CD4-positive, alpha-beta memory T cell (primary cell): ENCODE measurements at regions of chr7 and their contacts with region 1.

Region 1: DNA sequence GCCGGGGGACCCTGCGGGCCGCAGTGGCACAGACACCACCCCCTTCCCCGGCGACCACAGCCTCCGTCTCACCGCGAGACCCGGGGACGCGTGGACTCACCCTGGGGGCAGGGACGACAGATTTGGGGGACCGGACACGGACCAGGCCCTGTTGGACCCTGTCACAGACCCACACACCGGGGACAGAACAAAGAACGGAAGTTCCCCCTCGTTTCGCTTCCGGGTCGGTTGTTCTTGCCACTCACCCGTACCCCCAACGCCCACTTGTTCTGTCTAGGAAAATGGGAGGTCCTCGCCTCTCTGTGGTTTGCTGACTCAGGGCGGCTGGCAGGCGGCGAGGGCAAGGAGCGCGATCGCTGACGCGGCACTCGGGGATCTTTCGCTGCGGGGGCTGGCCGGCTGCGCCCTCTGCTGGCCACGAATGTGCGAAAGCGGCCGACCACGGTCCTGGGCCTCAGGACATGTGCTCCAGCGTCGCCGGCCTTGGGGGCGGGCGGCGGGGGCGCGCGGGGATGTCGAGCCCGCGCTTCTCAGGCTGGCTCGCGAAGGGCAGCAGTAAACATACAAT is at the start of gene ZNF3:
- DNase-seq: peak; percentile 98 to 99 (median 98)
- H3K4me3 ChIP-seq: peak within 1 kb of the TSS; percentile 87 to 88
- H3K4me3 Mint-ChIP-seq: peak within 1 kb of the TSS; percentile 85 to 97 (median 94)
- H3K27ac ChIP-seq: peak within 1 kb of the TSS; percentile 74
- H3K27ac Mint-ChIP-seq: peak within 1 kb of the TSS; percentile 90 to 99 (median 95)
- H3K4me1 ChIP-seq: peaks cover 25% of the 10 kb centered on the region
- H3K4me1 Mint-ChIP-seq: peaks cover 23 to 48% (median 36%) of the 10 kb centered on the region in 4 donors
- H3K27me3 ChIP-seq: no peaks in the 10 kb centered on the region
- H3K27me3 Mint-ChIP-seq: no peaks in the 10 kb centered on the region
- total RNA-seq, gene ZNF3: 44.2 to 44.8 TPM

Region 2: DNA sequence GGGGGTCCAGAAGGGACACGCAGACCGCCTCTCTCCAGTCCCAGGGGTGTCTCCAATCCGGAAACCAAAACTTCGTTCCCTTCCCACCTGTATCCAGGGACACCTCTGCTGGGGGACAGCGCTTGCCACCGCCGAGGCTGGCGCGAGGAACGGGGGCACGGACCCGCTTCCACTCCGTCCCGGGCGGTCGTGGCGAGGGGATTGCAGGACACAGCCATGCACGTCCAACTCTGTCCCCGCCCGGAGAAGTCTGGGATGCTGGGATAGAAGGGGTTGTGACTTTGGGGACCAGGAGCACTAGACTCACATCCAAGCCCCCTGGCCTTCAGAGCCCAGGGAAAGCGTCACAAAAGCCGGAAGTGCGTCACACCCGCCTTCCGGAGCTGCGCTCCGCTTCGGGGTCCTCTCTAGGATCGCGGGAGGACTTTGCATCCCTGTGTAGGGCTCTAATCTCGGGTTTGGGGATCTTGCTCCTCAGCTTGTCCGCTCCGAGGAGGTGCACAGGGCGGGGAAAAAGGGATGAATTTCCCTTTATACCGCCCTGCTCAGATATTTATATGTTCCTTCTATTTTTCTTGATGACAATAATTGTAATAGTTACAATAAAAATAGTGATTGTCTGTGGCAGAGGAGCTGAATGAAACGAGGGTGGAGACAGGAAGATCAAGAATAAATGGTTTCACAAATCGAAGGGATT is 529.7 kb before region 1 on chr7 and contains the start of gene FAM200A:
- CTCF ChIA-PET with region 1: no interaction called
- POLR2A ChIA-PET with region 1: no interaction called
- intact Hi-C with region 1: loop called (anchors 10 kb)
- DNase-seq: peak; percentile 82 to 88 (median 84)
- H3K4me3 ChIP-seq: peak within 1 kb of the TSS; percentile 94 to 95
- H3K4me3 Mint-ChIP-seq: peak within 1 kb of the TSS; percentile 86 to 98 (median 92)
- H3K27ac ChIP-seq: peak within 1 kb of the TSS; percentile 97
- H3K27ac Mint-ChIP-seq: peak within 1 kb of the TSS; percentile 76 to 99 (median 91)
- H3K4me1 ChIP-seq: peaks cover 33% of the 10 kb centered on the region
- H3K4me1 Mint-ChIP-seq: peaks cover 16 to 48% (median 30%) of the 10 kb centered on the region in 4 donors
- H3K27me3 ChIP-seq: no peaks in the 10 kb centered on the region
- H3K27me3 Mint-ChIP-seq: no peaks in the 10 kb centered on the region
- total RNA-seq, gene FAM200A: 12.9 to 13.0 TPM

Region 3: GRCh38 chr7:99844328-99844727 is 237.3 kb before region 1 on chr7:
- CTCF ChIA-PET with region 1: no interaction called
- POLR2A ChIA-PET with region 1: no interaction called
- intact Hi-C with region 1: no loop called
- DNase-seq: no peak
- H3K4me3 ChIP-seq: no peak overlapping the region
- H3K4me3 Mint-ChIP-seq: no peak overlapping the region
- H3K27ac ChIP-seq: no peak overlapping the region
- H3K27ac Mint-ChIP-seq: no peak overlapping the region
- H3K4me1 ChIP-seq: no peaks in the 10 kb centered on the region
- H3K4me1 Mint-ChIP-seq: no peaks in the 10 kb centered on the region
- H3K27me3 ChIP-seq: no peaks in the 10 kb centered on the region
- H3K27me3 Mint-ChIP-seq: peaks cover 0 to 16% of the 10 kb centered on the region in 2 donors

Region 4: DNA sequence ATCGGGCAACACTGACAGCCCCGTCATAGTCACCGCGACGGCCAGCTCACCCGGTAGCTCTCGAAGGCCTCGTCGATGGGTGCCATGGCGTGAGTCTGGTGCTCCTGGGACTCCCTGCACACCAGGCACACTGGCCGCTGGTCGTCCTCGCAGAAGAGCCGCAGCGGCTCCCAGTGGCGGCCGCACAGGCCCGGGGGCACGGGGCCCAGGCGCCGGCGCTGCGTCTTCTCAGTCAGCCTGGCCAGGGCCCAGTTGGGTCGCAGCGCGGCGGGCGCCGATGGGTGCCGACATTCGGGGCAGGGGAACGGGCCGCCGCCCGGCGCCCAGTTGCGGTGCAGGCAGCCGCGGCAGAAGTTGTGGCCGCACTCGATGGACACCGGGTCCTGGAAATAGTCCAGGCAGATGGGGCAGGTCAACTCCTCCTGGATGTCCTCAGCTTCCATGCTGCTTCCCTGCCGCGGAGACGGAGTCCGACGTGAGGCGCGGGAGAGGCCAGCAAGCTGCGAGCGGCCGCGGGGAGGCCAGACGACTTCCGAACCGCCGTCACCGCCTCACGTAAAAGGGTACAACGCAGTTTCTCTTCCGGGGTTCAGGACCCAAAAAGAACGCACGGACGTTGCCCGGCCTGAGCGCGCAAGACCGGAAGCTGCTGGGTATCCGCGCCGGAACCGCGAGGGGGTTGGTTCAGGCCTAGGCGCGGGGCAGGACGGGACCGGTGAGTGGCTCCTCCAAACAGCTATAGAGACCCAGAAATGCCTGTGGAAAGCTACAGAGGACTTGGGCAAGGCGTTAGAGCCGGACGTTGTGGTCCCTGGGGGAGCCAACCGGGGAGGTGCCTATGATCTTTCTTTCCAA is 162.4 kb before region 1 on chr7 and contains the start of gene TRIM4:
- CTCF ChIA-PET with region 1: interaction called, 15 read pairs
- POLR2A ChIA-PET with region 1: interaction called, 10 read pairs
- intact Hi-C with region 1: no loop called
- DNase-seq: peak; percentile 89 to 90 (median 89)
- H3K4me3 ChIP-seq: peak within 1 kb of the TSS; percentile 85 to 89
- H3K4me3 Mint-ChIP-seq: peak within 1 kb of the TSS; percentile 95 to 98 (median 96)
- H3K27ac ChIP-seq: peak within 1 kb of the TSS; percentile 94
- H3K27ac Mint-ChIP-seq: peak within 1 kb of the TSS; percentile 95 to 99 (median 98)
- H3K4me1 ChIP-seq: peaks cover 41% of the 10 kb centered on the region
- H3K4me1 Mint-ChIP-seq: peaks cover 37 to 61% (median 48%) of the 10 kb centered on the region in 4 donors
- H3K27me3 ChIP-seq: no peaks in the 10 kb centered on the region
- H3K27me3 Mint-ChIP-seq: no peaks in the 10 kb centered on the region
- total RNA-seq, gene TRIM4: 69.0 to 69.7 TPM

Region 5: GRCh38 chr7:99997545-99998137 is 84.0 kb before region 1 on chr7:
- CTCF ChIA-PET with region 1: interaction called, 3 read pairs
- POLR2A ChIA-PET with region 1: interaction called, 6 read pairs
- intact Hi-C with region 1: loop called (anchors 1 kb)
- DNase-seq: peak; percentile 72 to 78 (median 76)
- H3K4me3 ChIP-seq: peak overlapping the region in 1 of 2 donors; percentile 43
- H3K4me3 Mint-ChIP-seq: peak overlapping the region; percentile 58 to 80 (median 75)
- H3K27ac ChIP-seq: peak overlapping the region; percentile 3
- H3K27ac Mint-ChIP-seq: peak overlapping the region; percentile 69 to 95 (median 90)
- H3K4me1 ChIP-seq: peaks cover 18% of the 10 kb centered on the region
- H3K4me1 Mint-ChIP-seq: peaks cover 8 to 15% (median 12%) of the 10 kb centered on the region in 4 donors
- H3K27me3 ChIP-seq: no peaks in the 10 kb centered on the region
- H3K27me3 Mint-ChIP-seq: no peaks in the 10 kb centered on the region

Region 6: GRCh38 chr7:100049441-100050311 is 31.9 kb before region 1 on chr7 and contains the start of gene ZSCAN21:
- CTCF ChIA-PET with region 1: interaction called, 6 read pairs
- POLR2A ChIA-PET with region 1: no interaction called
- intact Hi-C with region 1: loop called (anchors 1 kb)
- DNase-seq: peak; percentile 76 to 82 (median 77)
- H3K4me3 ChIP-seq: peak within 1 kb of the TSS; percentile 67 to 94
- H3K4me3 Mint-ChIP-seq: peak within 1 kb of the TSS; percentile 91 to 97 (median 94)
- H3K27ac ChIP-seq: peak within 1 kb of the TSS; percentile 83
- H3K27ac Mint-ChIP-seq: peak within 1 kb of the TSS; percentile 91 to 98 (median 97)
- H3K4me1 ChIP-seq: peaks cover 13% of the 10 kb centered on the region
- H3K4me1 Mint-ChIP-seq: peaks cover 11 to 28% (median 18%) of the 10 kb centered on the region in 4 donors
- H3K27me3 ChIP-seq: no peaks in the 10 kb centered on the region
- H3K27me3 Mint-ChIP-seq: no peaks in the 10 kb centered on the region
- total RNA-seq, gene ZSCAN21: 9.9 to 10.6 TPM

Region 7: DNA sequence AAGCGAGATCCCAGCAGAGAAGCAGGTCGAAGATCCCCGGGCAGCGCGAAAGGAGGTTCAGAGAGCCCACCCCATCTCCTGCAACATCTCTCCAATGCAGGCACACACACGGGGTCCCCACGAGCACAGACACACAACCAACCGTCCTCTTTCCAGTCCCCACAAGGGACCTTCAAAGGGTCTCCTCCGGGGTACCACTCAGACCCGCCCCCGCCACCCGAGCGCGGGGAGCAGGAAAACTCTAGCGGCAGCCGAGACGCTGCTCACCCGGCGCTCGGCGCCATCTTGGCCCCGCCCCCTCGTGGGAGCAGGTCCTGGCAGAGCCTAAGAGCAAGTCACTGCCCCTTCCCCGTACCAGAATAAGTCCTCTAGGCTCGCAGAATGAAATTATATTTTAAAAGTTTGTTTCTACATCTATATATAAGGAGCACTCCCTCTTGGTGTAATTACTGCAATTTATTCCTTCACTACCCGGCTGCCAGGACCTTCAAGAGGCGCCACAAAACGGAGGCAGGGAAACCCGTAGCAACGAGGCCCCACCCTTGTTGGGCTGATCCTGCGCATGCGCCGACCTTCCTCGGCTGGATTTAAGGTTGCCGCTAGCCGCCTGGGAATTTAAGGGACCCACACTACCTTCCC is 37.6 kb after region 1 on chr7 and contains the starts of genes CNPY4 and TAF6:
- CTCF ChIA-PET with region 1: interaction called, 4 read pairs
- POLR2A ChIA-PET with region 1: interaction called, 12 read pairs
- intact Hi-C with region 1: loop called (anchors 1 kb)
- DNase-seq: peak; percentile 96
- H3K4me3 ChIP-seq: peak within 1 kb of the TSS; percentile 89 to 95
- H3K4me3 Mint-ChIP-seq: peak within 1 kb of the TSS; percentile 94 to 99 (median 96)
- H3K27ac ChIP-seq: peak within 1 kb of the TSS; percentile 80
- H3K27ac Mint-ChIP-seq: peak within 1 kb of the TSS; percentile 95 to 100 (median 99)
- H3K4me1 ChIP-seq: peaks cover 26% of the 10 kb centered on the region
- H3K4me1 Mint-ChIP-seq: peaks cover 7 to 40% (median 26%) of the 10 kb centered on the region in 4 donors
- H3K27me3 ChIP-seq: no peaks in the 10 kb centered on the region
- H3K27me3 Mint-ChIP-seq: no peaks in the 10 kb centered on the region
- total RNA-seq, gene CNPY4: 69.0 to 69.8 TPM
- total RNA-seq, gene TAF6: 61.6 to 62.2 TPM

Region 8: GRCh38 chr7:100221231-100221718 is 139.7 kb after region 1 on chr7:
- CTCF ChIA-PET with region 1: interaction called, 4 read pairs
- POLR2A ChIA-PET with region 1: interaction called, 6 read pairs
- intact Hi-C with region 1: loop called (anchors 2 kb)
- DNase-seq: peak; percentile 87 to 94 (median 88)
- H3K4me3 ChIP-seq: peak overlapping the region; percentile 84 to 91
- H3K4me3 Mint-ChIP-seq: peak overlapping the region; percentile 92 to 98 (median 96)
- H3K27ac ChIP-seq: peak overlapping the region; percentile 90
- H3K27ac Mint-ChIP-seq: peak overlapping the region; percentile 96 to 99 (median 99)
- H3K4me1 ChIP-seq: peaks cover 69% of the 10 kb centered on the region
- H3K4me1 Mint-ChIP-seq: peaks cover 28 to 75% (median 57%) of the 10 kb centered on the region in 4 donors
- H3K27me3 ChIP-seq: no peaks in the 10 kb centered on the region
- H3K27me3 Mint-ChIP-seq: no peaks in the 10 kb centered on the region

Region 9: DNA sequence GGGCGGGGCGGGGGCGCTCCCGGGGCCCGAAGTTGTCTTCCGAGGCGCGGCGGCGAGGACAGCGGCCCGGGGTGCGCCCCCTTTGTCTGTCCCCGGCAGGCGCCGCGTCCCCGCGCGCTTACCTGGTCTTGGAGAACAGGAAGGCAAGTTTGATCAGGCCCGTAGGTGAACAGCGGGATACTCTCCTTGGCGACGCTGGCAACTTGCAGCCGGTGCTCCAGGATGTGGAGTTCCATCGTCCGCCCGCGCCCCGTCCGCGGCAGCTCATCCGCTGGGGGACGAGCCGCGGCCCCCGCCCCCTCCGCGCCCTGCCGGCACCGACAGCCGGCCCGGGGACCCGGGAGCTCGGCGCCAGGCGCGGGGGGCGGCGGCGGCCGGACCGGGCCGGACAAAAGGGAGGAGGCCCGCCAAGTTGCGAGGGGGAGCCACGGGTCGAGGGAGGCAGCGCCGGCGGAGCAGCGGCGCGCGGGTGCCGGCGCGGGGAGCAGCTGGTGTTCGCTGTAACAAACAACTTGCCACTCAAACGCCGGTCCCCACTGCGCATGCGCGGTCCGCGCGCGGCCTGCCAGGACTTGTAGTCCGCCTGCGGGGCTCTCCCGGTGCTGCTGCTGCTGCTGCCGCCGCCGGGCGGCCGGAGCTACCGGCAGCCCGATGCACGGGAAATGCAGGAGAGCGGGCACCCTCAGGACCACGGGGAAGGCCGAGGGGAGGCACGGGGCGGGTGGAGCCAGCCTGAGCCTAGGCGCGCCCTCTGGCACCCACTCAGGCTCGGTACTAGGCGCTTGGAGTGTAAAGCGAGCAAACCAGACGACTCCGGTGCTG is 190.3 kb after region 1 on chr7:
- CTCF ChIA-PET with region 1: no interaction called
- POLR2A ChIA-PET with region 1: no interaction called
- intact Hi-C with region 1: no loop called
- DNase-seq: peak; percentile 97 to 99 (median 98)
- H3K4me3 ChIP-seq: peak overlapping the region in 1 of 2 donors; percentile 53
- H3K4me3 Mint-ChIP-seq: peak overlapping the region; percentile 76 to 88 (median 82)
- H3K27ac ChIP-seq: peak overlapping the region; percentile 55
- H3K27ac Mint-ChIP-seq: peak overlapping the region in 6 of 7 donors; percentile 21 to 88 (median 64)
- H3K4me1 ChIP-seq: peaks cover 5% of the 10 kb centered on the region
- H3K4me1 Mint-ChIP-seq: peaks cover 5 to 14% (median 10%) of the 10 kb centered on the region in 4 donors
- H3K27me3 ChIP-seq: no peaks in the 10 kb centered on the region
- H3K27me3 Mint-ChIP-seq: no peaks in the 10 kb centered on the region